ENCODE measurements at regions of chr1 and their contacts with region 1.

Region 1: DNA sequence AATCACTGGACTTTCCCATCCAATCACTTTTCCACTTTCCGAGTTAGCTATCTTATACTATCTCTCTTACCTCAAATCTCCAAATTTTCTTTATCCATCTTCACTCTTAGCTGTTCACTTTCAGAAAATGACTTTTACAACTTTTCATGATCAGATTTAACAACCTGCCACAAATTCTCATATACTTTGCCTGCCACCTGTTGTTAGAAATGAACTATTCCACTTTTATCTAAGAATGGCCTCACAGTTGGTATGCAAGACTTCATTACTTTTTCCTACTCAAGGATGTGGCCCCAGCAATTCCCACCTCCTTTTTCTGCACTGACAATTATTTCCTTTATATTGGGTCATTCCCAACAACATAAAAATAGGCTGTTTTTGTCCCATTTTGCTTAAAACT is 93.6 kb upstream of the DEPDC1 start:
- DNase-seq: no peak
- ATAC-seq: no peak
- H3K4me3 ChIP-seq: no peak overlapping the region
- H3K27ac ChIP-seq: no peak overlapping the region
- H3K4me1 ChIP-seq: no peaks in the 10 kb centered on the region
- H3K27me3 ChIP-seq: no peaks in the 10 kb centered on the region
- CTCF ChIP-seq: no peak

Region 2: GRCh38 chr1:68120136-68120791 is 470.2 kb before region 1 on chr1:
- intact Hi-C with region 1: no loop called
- DNase-seq: peak in 2 of 6 donors; percentile 40 to 56
- ATAC-seq: peak; percentile 80 to 94 (median 87)
- H3K4me3 ChIP-seq: no peak overlapping the region
- H3K27ac ChIP-seq: no peak overlapping the region
- H3K4me1 ChIP-seq: no peaks in the 10 kb centered on the region
- H3K27me3 ChIP-seq: no peaks in the 10 kb centered on the region
- CTCF ChIP-seq: peak; percentile 54 to 80 (median 64)

Region 3: DNA sequence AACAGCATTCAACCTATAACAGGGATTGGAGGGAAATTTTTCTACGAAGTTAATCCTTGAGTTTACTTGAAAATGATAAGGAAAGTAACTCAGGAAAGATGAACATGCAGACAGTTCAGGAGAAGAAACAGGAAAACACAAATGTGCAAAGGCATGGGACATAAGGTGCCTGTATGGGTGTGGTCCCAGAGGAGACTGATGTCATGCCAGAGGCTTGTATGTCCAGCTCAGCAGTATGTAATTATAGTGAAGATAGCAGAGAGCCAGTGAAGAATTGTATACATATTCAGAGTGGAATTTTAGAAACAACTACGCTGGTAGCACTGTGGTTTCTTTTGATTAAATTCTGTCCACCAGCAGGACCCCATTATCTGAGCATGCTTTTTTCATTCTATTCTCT is 1156.7 kb after region 1 on chr1:
- intact Hi-C with region 1: loop called in 1 of 3 experiments (anchors 10 kb)
- DNase-seq: no peak
- ATAC-seq: no peak
- H3K4me3 ChIP-seq: no peak overlapping the region
- H3K27ac ChIP-seq: no peak overlapping the region
- H3K4me1 ChIP-seq: no peaks in the 10 kb centered on the region
- H3K27me3 ChIP-seq: no peaks in the 10 kb centered on the region
- CTCF ChIP-seq: no peak

Measured in pancreas (tissue), 10 donors.